Esophagus squamous epithelium (tissue), 5 donors: ENCODE measurements at regions of chr7 and their contacts with region 1.

Region 1: GRCh38 chr7:156949541-156950380 is at the start of gene NOM1:
- DNase-seq: peak; percentile 24
- H3K4me3 ChIP-seq: peak within 1 kb of the TSS; percentile 78 to 99 (median 90)
- H3K27ac ChIP-seq: peak within 1 kb of the TSS; percentile 69 to 84 (median 76)
- H3K4me1 ChIP-seq: peaks cover 17 to 35% (median 22%) of the 10 kb centered on the region in 3 donors
- H3K27me3 ChIP-seq: peaks cover 0 to 5% (median 0%) of the 10 kb centered on the region in 4 donors
- CTCF ChIP-seq: peak; percentile 56 to 96 (median 89)
- POLR2A ChIP-seq: peak in 3 of 4 donors; percentile 1 to 60 (median 51)
- total RNA-seq, gene NOM1: 4.6 to 26.9 (median 17.8) TPM

Region 2: DNA sequence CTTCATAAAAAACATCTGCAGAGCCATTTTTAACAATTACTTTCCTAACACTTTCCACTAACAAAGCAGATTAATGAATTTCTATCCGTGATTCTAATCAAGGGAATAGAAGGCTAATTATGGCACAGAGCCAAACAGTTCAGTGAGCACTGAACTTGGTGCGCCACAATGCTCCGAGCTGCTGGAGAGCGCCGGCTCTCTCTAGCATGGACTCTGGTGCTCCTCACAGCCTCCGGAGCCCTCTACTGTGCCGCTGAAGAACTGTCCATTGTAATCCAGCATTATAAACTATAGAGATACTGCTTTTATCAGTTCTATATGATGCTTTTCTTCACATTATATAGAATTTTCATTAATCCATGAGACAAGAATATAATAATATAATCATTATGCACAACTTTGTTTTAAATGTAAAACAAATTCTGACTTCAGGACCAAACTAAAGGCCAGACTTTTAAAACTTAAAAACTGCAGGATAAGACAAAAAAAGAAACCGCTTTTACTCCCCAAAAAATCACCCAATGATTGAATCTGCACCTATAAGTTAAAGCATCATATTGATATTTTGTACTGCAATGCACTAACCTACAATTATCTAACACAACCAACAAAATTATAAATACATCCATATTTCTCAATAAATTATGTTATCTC is 185.6 kb before region 1 on chr7:
- intact Hi-C with region 1: no loop called
- DNase-seq: no peak
- H3K4me3 ChIP-seq: no peak overlapping the region
- H3K27ac ChIP-seq: no peak overlapping the region
- H3K4me1 ChIP-seq: peaks cover 0 to 4% (median 0%) of the 10 kb centered on the region in 3 donors
- H3K27me3 ChIP-seq: no peaks in the 10 kb centered on the region
- CTCF ChIP-seq: peak; percentile 17 to 79 (median 62)
- POLR2A ChIP-seq: no peak

Region 3: GRCh38 chr7:156875766-156876165 is 74.0 kb before region 1 on chr7:
- intact Hi-C with region 1: no loop called
- DNase-seq: no peak
- H3K4me3 ChIP-seq: no peak overlapping the region
- H3K27ac ChIP-seq: no peak overlapping the region
- H3K4me1 ChIP-seq: no peaks in the 10 kb centered on the region
- H3K27me3 ChIP-seq: no peaks in the 10 kb centered on the region
- CTCF ChIP-seq: no peak
- POLR2A ChIP-seq: no peak

Region 4: DNA sequence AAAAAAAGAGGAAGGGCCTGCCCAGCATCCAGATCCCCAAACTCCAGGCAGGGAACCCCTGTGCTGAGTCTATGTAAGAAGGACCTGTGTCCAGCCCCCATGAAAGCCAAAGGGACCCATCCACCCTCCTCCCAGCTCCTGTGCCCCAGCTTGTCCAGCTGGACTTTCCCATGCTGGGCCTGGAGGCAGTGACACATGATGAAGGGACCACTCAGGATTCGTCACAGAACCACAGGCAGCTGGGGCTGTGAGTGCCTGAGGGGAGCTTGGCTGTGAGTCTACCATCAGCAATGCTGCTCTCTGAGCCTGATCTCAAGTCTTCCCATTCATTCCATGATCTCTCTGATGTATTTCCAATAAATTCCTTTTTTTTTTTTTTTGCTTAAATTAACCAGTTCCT is 96.9 kb after region 1 on chr7:
- intact Hi-C with region 1: no loop called
- DNase-seq: no peak
- H3K4me3 ChIP-seq: no peak overlapping the region
- H3K27ac ChIP-seq: no peak overlapping the region
- H3K4me1 ChIP-seq: no peaks in the 10 kb centered on the region
- H3K27me3 ChIP-seq: peaks cover 0 to 31% (median 0%) of the 10 kb centered on the region in 4 donors
- CTCF ChIP-seq: no peak
- POLR2A ChIP-seq: no peak

Region 5: DNA sequence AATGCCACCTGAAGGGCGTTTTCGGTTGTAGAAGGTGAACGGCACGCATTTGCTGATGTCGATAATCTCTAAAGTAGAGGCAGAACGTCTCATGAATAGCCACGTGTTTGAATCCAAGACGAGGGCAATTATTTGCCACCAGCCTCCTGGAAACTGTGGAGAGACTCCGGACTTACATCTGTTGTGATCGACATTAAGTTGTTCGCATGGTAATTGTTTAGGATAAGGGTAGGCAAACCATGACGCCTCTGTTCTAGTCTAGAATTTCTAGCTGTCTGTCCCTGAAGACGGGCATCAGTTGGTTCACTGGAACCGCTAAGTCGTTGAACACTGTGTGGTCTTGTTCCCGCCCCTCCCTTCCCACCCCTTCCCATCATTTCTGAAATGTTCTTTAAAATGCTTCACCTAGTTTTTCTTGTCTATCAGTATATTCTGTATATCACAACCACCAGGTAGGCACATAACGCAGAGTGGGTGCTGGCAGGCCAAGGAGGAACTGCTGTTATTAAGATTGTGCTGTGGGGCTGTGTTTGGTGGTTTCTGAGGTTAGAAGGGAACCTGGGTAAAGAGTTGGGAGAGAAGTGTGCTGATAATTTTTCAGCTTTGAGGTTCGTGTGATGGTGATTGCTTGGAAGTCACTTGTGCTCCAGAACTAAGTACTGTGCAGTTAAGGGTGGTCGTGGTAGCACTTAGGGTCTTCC is 190.2 kb after region 1 on chr7:
- intact Hi-C with region 1: loop called (anchors 10 kb)
- DNase-seq: no peak
- H3K4me3 ChIP-seq: peak overlapping the region; percentile 56 to 85 (median 82)
- H3K27ac ChIP-seq: peak overlapping the region; percentile 90 to 99 (median 94)
- H3K4me1 ChIP-seq: peaks cover 13 to 62% (median 21%) of the 10 kb centered on the region in 3 donors
- H3K27me3 ChIP-seq: no peaks in the 10 kb centered on the region
- CTCF ChIP-seq: no peak
- POLR2A ChIP-seq: no peak

Region 6: DNA sequence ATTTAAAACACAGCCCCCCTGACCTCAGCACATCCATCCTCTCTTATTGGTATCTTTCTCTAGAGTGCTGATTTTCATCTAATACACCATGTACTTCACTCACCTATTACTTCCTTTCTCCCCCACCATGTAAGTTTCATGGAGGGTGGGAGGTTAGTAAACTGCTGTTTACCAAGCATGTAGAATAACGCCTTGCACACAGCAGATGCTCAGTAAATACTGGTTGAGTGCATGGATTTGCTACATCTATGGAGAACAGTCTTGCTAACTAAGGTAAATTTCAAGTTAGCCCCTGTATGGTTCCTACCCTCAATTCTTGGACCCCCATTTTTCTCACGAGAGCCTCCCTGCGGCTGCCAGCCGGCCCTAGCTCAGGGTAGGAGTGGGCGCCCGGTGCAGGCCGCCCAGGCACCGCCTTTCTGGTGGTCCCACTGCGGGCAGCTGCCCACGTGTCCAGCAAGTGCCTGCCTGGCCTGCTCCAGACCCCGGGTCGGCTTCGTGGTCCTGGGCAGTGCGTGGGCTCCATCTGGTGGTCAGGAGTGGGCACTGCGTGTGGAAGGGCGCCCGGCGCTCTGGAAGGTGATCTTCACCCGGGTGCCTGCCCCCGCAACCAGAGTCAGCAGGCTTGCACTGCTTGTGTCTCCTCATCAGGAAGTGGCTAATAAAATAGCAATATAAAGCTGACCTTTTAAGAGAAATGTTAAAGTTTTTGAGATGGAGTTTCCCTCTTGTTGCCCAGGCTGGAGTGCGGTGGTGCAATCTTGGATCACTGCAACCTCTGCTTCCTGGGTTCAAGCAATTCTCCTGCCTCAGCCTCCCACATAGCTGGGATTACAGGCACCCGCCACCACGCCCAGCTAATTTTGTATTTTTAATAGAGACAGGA is 323.7 kb after region 1 on chr7:
- intact Hi-C with region 1: loop called (anchors 10 kb)
- DNase-seq: no peak
- H3K4me3 ChIP-seq: peak overlapping the region in 1 of 4 donors; percentile 28
- H3K27ac ChIP-seq: peak overlapping the region in 1 of 4 donors; percentile 72
- H3K4me1 ChIP-seq: peaks cover 15 to 54% (median 29%) of the 10 kb centered on the region in 3 donors
- H3K27me3 ChIP-seq: peaks cover 0 to 4% (median 0%) of the 10 kb centered on the region in 4 donors
- CTCF ChIP-seq: peak; percentile 91 to 95 (median 95)
- POLR2A ChIP-seq: no peak